Endothelial cell of umbilical vein (primary cell): ENCODE measurements at regions of chr4 and their contacts with region 1.

Region 1: GRCh38 chr4:140252742-140253555 is 99.0 kb upstream of the MAML3 start:
- DNase-seq: peak; percentile 93
- H3K4me3 ChIP-seq: peak overlapping the region in 1 of 3 experiments; percentile 37
- H3K27ac ChIP-seq: peak overlapping the region; percentile 78
- H3K4me1 ChIP-seq: peaks cover 60% of the 10 kb centered on the region
- H3K27me3 ChIP-seq: no peaks in the 10 kb centered on the region
- CTCF ChIP-seq: peak; percentile 83 to 91
- POLR2A ChIP-seq: no peak

Region 2: DNA sequence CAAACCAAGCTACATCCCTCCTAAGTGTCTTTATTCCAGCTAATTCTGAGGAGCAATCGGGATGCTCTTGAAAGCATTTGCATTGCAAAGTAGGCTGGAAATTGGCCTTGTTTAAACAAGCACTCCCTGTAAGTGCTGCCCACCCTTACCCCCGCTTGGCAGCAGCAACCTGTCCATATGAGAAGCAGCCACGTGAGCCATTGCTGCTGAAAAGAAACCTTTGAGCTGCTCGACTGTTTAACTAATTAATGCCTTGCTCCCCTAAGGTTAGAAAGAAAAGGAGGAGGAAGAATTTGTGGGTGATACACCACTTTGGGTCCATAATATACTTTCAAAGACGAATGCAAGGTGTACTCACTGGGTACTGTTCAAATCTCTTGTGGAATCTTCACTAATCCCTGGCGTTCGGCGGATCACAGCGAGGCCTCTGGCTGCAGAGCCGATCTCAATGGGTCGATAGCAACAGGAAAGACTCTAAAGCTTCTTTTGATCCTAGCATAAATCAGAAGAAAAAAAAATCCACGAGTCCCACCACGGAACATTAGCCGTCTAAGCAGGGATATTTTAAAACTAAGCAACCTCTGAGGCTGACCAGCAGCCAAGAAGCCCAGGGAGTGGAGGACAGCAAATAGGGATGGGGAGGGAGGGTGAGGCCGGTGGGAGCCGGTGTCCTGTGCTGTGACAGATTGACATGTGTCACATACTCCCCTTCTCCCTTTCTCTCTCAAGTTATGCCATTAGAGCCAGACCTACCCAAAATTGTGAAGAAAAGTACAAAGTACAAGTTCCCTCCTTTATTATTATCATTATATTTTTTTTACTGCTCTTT is 624.6 kb before region 1 on chr4:
- CTCF ChIA-PET with region 1: no interaction called
- POLR2A ChIA-PET with region 1: no interaction called
- dilution Hi-C with region 1: no loop called
- intact Hi-C with region 1: no loop called
- DNase-seq: no peak
- H3K4me3 ChIP-seq: no peak overlapping the region
- H3K27ac ChIP-seq: no peak overlapping the region
- H3K4me1 ChIP-seq: no peaks in the 10 kb centered on the region
- H3K27me3 ChIP-seq: peaks cover 15 to 16% of the 10 kb centered on the region in 2 experiments
- CTCF ChIP-seq: no peak
- POLR2A ChIP-seq: no peak

Region 3: GRCh38 chr4:139734875-139735380 is 518.0 kb before region 1 on chr4:
- CTCF ChIA-PET with region 1: interaction called, 29 read pairs
- POLR2A ChIA-PET with region 1: no interaction called
- dilution Hi-C with region 1: no loop called
- intact Hi-C with region 1: loop called (anchors 1 kb)
- DNase-seq: peak; percentile 94
- H3K4me3 ChIP-seq: peak overlapping the region in 2 of 3 experiments; percentile 18 to 34
- H3K27ac ChIP-seq: peak overlapping the region; percentile 14
- H3K4me1 ChIP-seq: peaks cover 12% of the 10 kb centered on the region
- H3K27me3 ChIP-seq: no peaks in the 10 kb centered on the region
- CTCF ChIP-seq: peak; percentile 66 to 88
- POLR2A ChIP-seq: no peak

Region 4: GRCh38 chr4:139913398-139913990 is 339.5 kb before region 1 on chr4:
- CTCF ChIA-PET with region 1: interaction called, 3 read pairs
- POLR2A ChIA-PET with region 1: no interaction called
- dilution Hi-C with region 1: no loop called
- intact Hi-C with region 1: loop called (anchors 5 kb)
- DNase-seq: peak; percentile 84
- H3K4me3 ChIP-seq: no peak overlapping the region
- H3K27ac ChIP-seq: peak overlapping the region; percentile 31
- H3K4me1 ChIP-seq: peaks cover 26% of the 10 kb centered on the region
- H3K27me3 ChIP-seq: no peaks in the 10 kb centered on the region
- CTCF ChIP-seq: no peak
- POLR2A ChIP-seq: no peak

Region 5: GRCh38 chr4:140095694-140096482 is 157.1 kb before region 1 on chr4:
- CTCF ChIA-PET with region 1: interaction called, 11 read pairs
- POLR2A ChIA-PET with region 1: no interaction called
- dilution Hi-C with region 1: no loop called
- intact Hi-C with region 1: loop called (anchors 1 kb)
- DNase-seq: peak; percentile 95
- H3K4me3 ChIP-seq: peak overlapping the region in 1 of 3 experiments; percentile 57
- H3K27ac ChIP-seq: peak overlapping the region; percentile 100
- H3K4me1 ChIP-seq: peaks cover 97% of the 10 kb centered on the region
- H3K27me3 ChIP-seq: no peaks in the 10 kb centered on the region
- CTCF ChIP-seq: no peak
- POLR2A ChIP-seq: peak; percentile 53

Region 6: GRCh38 chr4:140237606-140237986 is 15.4 kb before region 1 on chr4:
- CTCF ChIA-PET with region 1: interaction called, 8 read pairs
- POLR2A ChIA-PET with region 1: interaction called, 3 read pairs
- dilution Hi-C with region 1: no loop called
- intact Hi-C with region 1: loop called (anchors 1 kb)
- DNase-seq: peak; percentile 89
- H3K4me3 ChIP-seq: no peak overlapping the region
- H3K27ac ChIP-seq: peak overlapping the region; percentile 30
- H3K4me1 ChIP-seq: peaks cover 34% of the 10 kb centered on the region
- H3K27me3 ChIP-seq: no peaks in the 10 kb centered on the region
- CTCF ChIP-seq: no peak
- POLR2A ChIP-seq: no peak